CD4-positive, alpha-beta memory T cell (primary cell): ENCODE measurements at regions of chr6 and their contacts with region 1.

Region 1: DNA sequence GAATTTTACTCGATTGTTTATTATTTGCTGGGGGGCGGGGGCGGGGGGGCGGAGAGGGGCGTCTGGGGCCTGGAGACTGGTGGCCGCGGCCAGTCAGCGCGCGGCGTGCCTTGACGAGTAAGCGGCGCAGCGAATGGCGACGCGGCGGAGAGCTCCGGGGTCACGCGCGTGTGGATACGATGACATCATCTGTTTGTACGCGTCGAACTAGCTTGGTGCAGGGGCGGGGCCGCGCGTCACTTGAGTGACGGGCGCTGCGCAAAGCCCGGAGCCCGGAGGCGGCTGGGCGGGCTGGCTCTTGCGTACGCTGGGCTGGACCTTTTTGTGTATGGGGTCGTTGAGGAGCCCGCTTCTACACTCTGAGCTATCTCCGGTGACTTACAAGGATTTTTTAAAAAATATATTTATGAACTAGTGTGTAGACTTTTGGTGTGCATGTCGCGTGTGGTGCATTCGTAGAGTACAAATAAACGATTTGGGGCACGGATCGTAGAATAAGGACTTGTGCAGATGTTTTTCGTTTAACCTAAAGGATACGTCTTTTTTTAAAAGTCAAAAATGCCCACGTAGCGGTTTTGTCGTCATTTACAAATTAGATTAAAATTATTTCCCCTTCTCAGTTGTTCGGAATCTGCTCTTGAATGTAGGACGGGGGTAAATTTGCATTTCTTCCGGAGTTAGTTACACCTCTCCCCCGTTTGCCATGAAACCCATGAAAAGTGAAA is 2.2 kb upstream of the FOXO3 start:
- DNase-seq: peak; percentile 96 to 98 (median 98)
- H3K4me3 ChIP-seq: peak overlapping the region; percentile 98 to 99
- H3K4me3 Mint-ChIP-seq: peak overlapping the region; percentile 92 to 98 (median 98)
- H3K27ac ChIP-seq: peak overlapping the region; percentile 97
- H3K27ac Mint-ChIP-seq: peak overlapping the region; percentile 96 to 100 (median 99)
- H3K4me1 ChIP-seq: peaks cover 25% of the 10 kb centered on the region
- H3K4me1 Mint-ChIP-seq: peaks cover 14 to 28% (median 23%) of the 10 kb centered on the region in 4 donors
- H3K27me3 ChIP-seq: no peaks in the 10 kb centered on the region
- H3K27me3 Mint-ChIP-seq: no peaks in the 10 kb centered on the region

Region 2: GRCh38 chr6:108363889-108364313 is 194.6 kb before region 1 on chr6:
- CTCF ChIA-PET with region 1: no interaction called
- POLR2A ChIA-PET with region 1: no interaction called
- intact Hi-C with region 1: no loop called
- DNase-seq: no peak
- H3K4me3 ChIP-seq: no peak overlapping the region
- H3K4me3 Mint-ChIP-seq: peak overlapping the region in 1 of 8 donors; percentile 11
- H3K27ac ChIP-seq: no peak overlapping the region
- H3K27ac Mint-ChIP-seq: no peak overlapping the region
- H3K4me1 ChIP-seq: no peaks in the 10 kb centered on the region
- H3K4me1 Mint-ChIP-seq: peaks cover 0 to 4% (median 1%) of the 10 kb centered on the region in 4 donors
- H3K27me3 ChIP-seq: no peaks in the 10 kb centered on the region
- H3K27me3 Mint-ChIP-seq: no peaks in the 10 kb centered on the region

Region 3: DNA sequence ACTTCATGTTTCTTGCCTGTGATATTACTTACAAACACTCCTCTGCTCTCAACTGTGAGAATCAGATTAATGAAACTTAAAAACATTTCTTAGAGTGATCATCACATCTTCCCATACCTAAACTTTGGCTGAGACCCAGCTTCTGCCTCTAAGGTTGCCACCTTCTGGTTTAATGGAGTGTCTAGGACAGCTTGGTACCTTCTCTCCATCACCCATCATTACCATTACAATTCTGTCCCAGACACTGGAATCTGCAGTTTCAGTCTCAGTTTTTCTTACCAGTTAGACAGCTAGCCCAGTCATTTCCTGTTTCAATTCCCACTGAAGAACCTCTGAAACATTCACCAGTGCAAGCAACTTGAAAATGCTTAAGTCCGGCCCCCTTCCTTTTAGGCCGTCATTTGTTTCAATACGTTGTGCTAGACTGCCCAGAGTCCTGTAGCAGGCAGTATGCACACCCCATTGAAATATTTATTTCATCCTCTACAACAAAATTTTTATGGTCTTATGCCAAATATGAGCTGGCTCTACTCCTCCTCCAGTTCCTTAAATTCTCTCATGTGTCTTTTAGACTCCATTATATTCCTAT is 104.8 kb before region 1 on chr6:
- CTCF ChIA-PET with region 1: no interaction called
- POLR2A ChIA-PET with region 1: no interaction called
- intact Hi-C with region 1: no loop called
- DNase-seq: no peak
- H3K4me3 ChIP-seq: no peak overlapping the region
- H3K4me3 Mint-ChIP-seq: no peak overlapping the region
- H3K27ac ChIP-seq: no peak overlapping the region
- H3K27ac Mint-ChIP-seq: no peak overlapping the region
- H3K4me1 ChIP-seq: no peaks in the 10 kb centered on the region
- H3K4me1 Mint-ChIP-seq: no peaks in the 10 kb centered on the region
- H3K27me3 ChIP-seq: no peaks in the 10 kb centered on the region
- H3K27me3 Mint-ChIP-seq: peaks cover 1% of the 10 kb centered on the region in 2 donors

Region 4: DNA sequence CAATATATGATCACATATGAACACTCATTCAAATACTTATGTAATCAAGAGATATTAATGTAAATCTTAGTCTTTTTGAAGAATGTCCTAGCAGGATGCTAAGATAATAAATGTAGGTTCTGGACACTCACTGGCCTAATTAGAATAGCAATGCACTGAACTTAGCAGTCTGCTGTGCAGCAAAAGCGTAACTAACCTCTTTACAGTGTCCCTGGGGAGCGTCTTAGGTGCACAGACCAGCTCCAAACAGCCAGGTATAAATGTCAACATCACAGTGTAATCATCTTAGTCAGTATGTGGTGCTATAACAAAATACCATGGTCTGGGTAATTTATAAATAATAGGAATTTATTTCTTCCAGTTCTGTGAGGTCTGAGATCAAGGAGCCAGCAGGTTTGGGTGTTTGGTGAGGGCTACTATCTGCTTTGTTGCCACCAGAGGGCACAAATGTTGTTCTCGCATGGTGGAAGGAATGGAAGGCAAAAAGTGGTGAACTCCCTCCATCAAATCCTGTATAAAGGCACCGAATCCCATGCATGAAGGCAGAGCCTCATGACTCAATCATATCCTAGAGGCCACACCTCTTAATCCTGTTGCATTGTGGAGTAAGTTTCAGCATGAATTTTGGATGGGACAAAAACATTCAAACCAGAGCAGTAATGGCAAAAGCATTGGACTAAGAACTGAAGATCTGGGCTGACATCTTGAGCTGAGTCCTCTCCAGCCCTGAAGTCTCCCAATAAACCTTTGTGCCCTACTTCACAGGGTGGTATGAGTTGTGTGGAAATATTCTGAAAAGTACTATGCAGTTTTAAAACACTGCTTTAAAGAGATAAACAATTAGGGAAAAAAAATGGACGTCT is 39.6 kb before region 1 on chr6:
- CTCF ChIA-PET with region 1: no interaction called
- POLR2A ChIA-PET with region 1: no interaction called
- intact Hi-C with region 1: no loop called
- DNase-seq: no peak
- H3K4me3 ChIP-seq: no peak overlapping the region
- H3K4me3 Mint-ChIP-seq: no peak overlapping the region
- H3K27ac ChIP-seq: no peak overlapping the region
- H3K27ac Mint-ChIP-seq: no peak overlapping the region
- H3K4me1 ChIP-seq: no peaks in the 10 kb centered on the region
- H3K4me1 Mint-ChIP-seq: no peaks in the 10 kb centered on the region
- H3K27me3 ChIP-seq: no peaks in the 10 kb centered on the region
- H3K27me3 Mint-ChIP-seq: no peaks in the 10 kb centered on the region

Region 5: GRCh38 chr6:108541838-108542759 is 16.4 kb before region 1 on chr6:
- CTCF ChIA-PET with region 1: interaction called, 14 read pairs
- POLR2A ChIA-PET with region 1: interaction called, 8 read pairs
- intact Hi-C with region 1: loop called (anchors 1 kb)
- DNase-seq: peak; percentile 71 to 74 (median 73)
- H3K4me3 ChIP-seq: no peak overlapping the region
- H3K4me3 Mint-ChIP-seq: peak overlapping the region in 4 of 8 donors; percentile 16 to 71 (median 56)
- H3K27ac ChIP-seq: no peak overlapping the region
- H3K27ac Mint-ChIP-seq: no peak overlapping the region
- H3K4me1 ChIP-seq: peaks cover 8% of the 10 kb centered on the region
- H3K4me1 Mint-ChIP-seq: peaks cover 6 to 17% (median 8%) of the 10 kb centered on the region in 4 donors
- H3K27me3 ChIP-seq: no peaks in the 10 kb centered on the region
- H3K27me3 Mint-ChIP-seq: peaks cover 4 to 6% of the 10 kb centered on the region in 2 donors

Region 6: DNA sequence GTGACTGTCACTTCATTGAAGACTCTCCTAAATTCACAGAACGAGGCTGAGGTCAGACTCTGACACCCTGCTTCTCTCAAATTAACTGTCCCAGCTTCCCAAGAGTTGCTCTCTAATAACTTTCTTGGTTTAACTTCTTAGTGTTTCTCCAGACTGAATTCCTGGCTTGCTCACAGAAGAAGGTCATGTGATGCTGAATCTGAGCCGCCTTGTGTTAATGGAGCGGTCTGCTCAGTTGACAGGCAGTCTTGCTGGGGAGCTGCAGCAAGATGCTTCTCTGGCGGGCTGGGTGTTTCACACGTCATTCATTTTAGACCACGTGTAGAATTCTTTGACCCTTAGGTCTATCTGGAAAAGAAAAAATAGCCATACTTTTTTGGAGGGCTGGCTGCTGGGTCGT is 109.5 kb after region 1 on chr6:
- CTCF ChIA-PET with region 1: no interaction called
- POLR2A ChIA-PET with region 1: no interaction called
- intact Hi-C with region 1: loop called (anchors 5 kb)
- DNase-seq: no peak
- H3K4me3 ChIP-seq: no peak overlapping the region
- H3K4me3 Mint-ChIP-seq: no peak overlapping the region
- H3K27ac ChIP-seq: no peak overlapping the region
- H3K27ac Mint-ChIP-seq: no peak overlapping the region
- H3K4me1 ChIP-seq: peaks cover 6% of the 10 kb centered on the region
- H3K4me1 Mint-ChIP-seq: peaks cover 13 to 71% (median 37%) of the 10 kb centered on the region in 4 donors
- H3K27me3 ChIP-seq: no peaks in the 10 kb centered on the region
- H3K27me3 Mint-ChIP-seq: no peaks in the 10 kb centered on the region

Region 7: DNA sequence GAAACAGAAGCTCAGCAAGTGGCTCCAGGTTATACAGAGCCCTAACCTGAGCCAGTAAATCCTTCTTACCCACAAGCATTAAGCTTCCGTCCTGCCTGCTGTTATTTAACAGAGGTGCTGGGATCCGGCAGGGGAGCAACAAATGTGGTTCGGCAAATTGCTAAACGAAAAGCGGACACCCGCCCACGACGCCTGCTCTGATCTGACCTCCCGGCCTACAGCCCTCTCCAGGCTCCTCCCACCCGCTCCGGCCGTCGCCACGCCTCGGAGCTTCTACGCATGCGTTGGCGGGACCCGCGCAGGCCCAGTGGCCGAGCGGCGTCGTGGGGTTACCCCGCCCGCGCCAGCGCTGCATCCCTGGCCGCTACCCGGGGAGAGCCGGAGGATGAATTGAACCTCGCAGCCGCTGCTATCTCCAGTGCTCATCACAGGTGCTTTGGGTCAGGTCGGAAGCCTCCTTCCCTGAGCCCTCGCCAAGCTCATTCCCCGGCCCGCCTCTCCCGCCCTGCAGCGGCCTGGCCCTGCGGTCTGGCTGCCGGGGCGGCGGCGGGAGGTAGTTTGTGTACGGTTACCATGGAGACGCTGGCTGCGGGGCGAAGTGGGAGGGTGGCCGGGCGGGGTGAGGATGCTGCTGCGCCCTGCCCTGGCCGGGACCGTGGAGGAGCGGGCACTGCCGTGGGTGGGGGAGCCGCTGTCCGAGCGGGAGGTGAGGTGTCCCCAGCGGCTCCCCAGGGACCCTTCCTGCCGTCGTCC is 289.8 kb after region 1 on chr6 and contains the start of gene ARMC2:
- CTCF ChIA-PET with region 1: interaction called, 4 read pairs
- POLR2A ChIA-PET with region 1: interaction called, 44 read pairs
- intact Hi-C with region 1: loop called (anchors 1 kb)
- DNase-seq: peak; percentile 85 to 88 (median 86)
- H3K4me3 ChIP-seq: peak within 1 kb of the TSS; percentile 46 to 78
- H3K4me3 Mint-ChIP-seq: peak within 1 kb of the TSS; percentile 84 to 91 (median 86)
- H3K27ac ChIP-seq: peak within 1 kb of the TSS; percentile 58
- H3K27ac Mint-ChIP-seq: peak within 1 kb of the TSS; percentile 81 to 93 (median 91)
- H3K4me1 ChIP-seq: peaks cover 15% of the 10 kb centered on the region
- H3K4me1 Mint-ChIP-seq: peaks cover 17 to 33% (median 23%) of the 10 kb centered on the region in 4 donors
- H3K27me3 ChIP-seq: no peaks in the 10 kb centered on the region
- H3K27me3 Mint-ChIP-seq: no peaks in the 10 kb centered on the region
- total RNA-seq, gene ARMC2: 10.7 to 11.2 TPM

Region 8: GRCh38 chr6:108944707-108945680 is 386.5 kb after region 1 on chr6:
- CTCF ChIA-PET with region 1: no interaction called
- POLR2A ChIA-PET with region 1: interaction called, 3 read pairs
- intact Hi-C with region 1: loop called (anchors 5 kb)
- DNase-seq: no peak
- H3K4me3 ChIP-seq: no peak overlapping the region
- H3K4me3 Mint-ChIP-seq: peak overlapping the region in 3 of 8 donors; percentile 3 to 40 (median 15)
- H3K27ac ChIP-seq: no peak overlapping the region
- H3K27ac Mint-ChIP-seq: peak overlapping the region in 5 of 7 donors; percentile 3 to 24 (median 7)
- H3K4me1 ChIP-seq: peaks cover 37% of the 10 kb centered on the region
- H3K4me1 Mint-ChIP-seq: peaks cover 22 to 66% (median 38%) of the 10 kb centered on the region in 4 donors
- H3K27me3 ChIP-seq: no peaks in the 10 kb centered on the region
- H3K27me3 Mint-ChIP-seq: no peaks in the 10 kb centered on the region

Region 9: GRCh38 chr6:109095027-109095834 is 536.7 kb after region 1 on chr6 and contains the start of gene CEP57L1:
- CTCF ChIA-PET with region 1: no interaction called
- POLR2A ChIA-PET with region 1: interaction called, 84 read pairs
- intact Hi-C with region 1: loop called (anchors 1 kb)
- DNase-seq: peak; percentile 94 to 97 (median 95)
- H3K4me3 ChIP-seq: peak within 1 kb of the TSS; percentile 74 to 80
- H3K4me3 Mint-ChIP-seq: peak within 1 kb of the TSS; percentile 90 to 97 (median 95)
- H3K27ac ChIP-seq: peak within 1 kb of the TSS; percentile 97
- H3K27ac Mint-ChIP-seq: peak within 1 kb of the TSS; percentile 97 to 100 (median 99)
- H3K4me1 ChIP-seq: peaks cover 44% of the 10 kb centered on the region
- H3K4me1 Mint-ChIP-seq: peaks cover 36 to 60% (median 44%) of the 10 kb centered on the region in 4 donors
- H3K27me3 ChIP-seq: no peaks in the 10 kb centered on the region
- H3K27me3 Mint-ChIP-seq: no peaks in the 10 kb centered on the region
- total RNA-seq, gene CEP57L1: 5.7 to 9.2 TPM